Breast epithelium (tissue), 4 donors: ENCODE measurements at regions of chr9 and their contacts with region 1.

Region 1: GRCh38 chr9:127199001-127199791 is 65.4 kb upstream of the GARNL3 start:
- DNase-seq: peak; percentile 70 to 76
- H3K4me3 ChIP-seq: no peak overlapping the region
- H3K27ac ChIP-seq: peak overlapping the region; percentile 40 to 79
- H3K4me1 ChIP-seq: peaks cover 0 to 13% of the 10 kb centered on the region in 2 donors
- H3K27me3 ChIP-seq: no peaks in the 10 kb centered on the region
- CTCF ChIP-seq: peak; percentile 97 to 98 (median 98)
- POLR2A ChIP-seq: no peak

Region 2: GRCh38 chr9:126939821-126940221 is 259.4 kb before region 1 on chr9:
- intact Hi-C with region 1: loop called (anchors 5 kb)
- DNase-seq: no peak
- H3K4me3 ChIP-seq: no peak overlapping the region
- H3K27ac ChIP-seq: no peak overlapping the region
- H3K4me1 ChIP-seq: no peaks in the 10 kb centered on the region
- H3K27me3 ChIP-seq: no peaks in the 10 kb centered on the region
- CTCF ChIP-seq: no peak
- POLR2A ChIP-seq: no peak

Region 3: GRCh38 chr9:127053057-127053821 is 146.0 kb before region 1 on chr9:
- intact Hi-C with region 1: loop called (anchors 10 kb)
- DNase-seq: no peak
- H3K4me3 ChIP-seq: no peak overlapping the region
- H3K27ac ChIP-seq: peak overlapping the region; percentile 68 to 89
- H3K4me1 ChIP-seq: peaks cover 0 to 5% of the 10 kb centered on the region in 2 donors
- H3K27me3 ChIP-seq: no peaks in the 10 kb centered on the region
- CTCF ChIP-seq: no peak
- POLR2A ChIP-seq: no peak

Region 4: GRCh38 chr9:127159325-127159801 is 39.8 kb before region 1 on chr9:
- intact Hi-C with region 1: no loop called
- DNase-seq: peak in 1 of 2 donors; percentile 43
- H3K4me3 ChIP-seq: no peak overlapping the region
- H3K27ac ChIP-seq: peak overlapping the region in 1 of 2 donors; percentile 79
- H3K4me1 ChIP-seq: peaks cover 0 to 4% of the 10 kb centered on the region in 2 donors
- H3K27me3 ChIP-seq: no peaks in the 10 kb centered on the region
- CTCF ChIP-seq: no peak
- POLR2A ChIP-seq: no peak

Region 5: GRCh38 chr9:127178686-127179632 is 20.2 kb before region 1 on chr9:
- intact Hi-C with region 1: no loop called
- DNase-seq: peak; percentile 25 to 31
- H3K4me3 ChIP-seq: no peak overlapping the region
- H3K27ac ChIP-seq: peak overlapping the region; percentile 55 to 76
- H3K4me1 ChIP-seq: peaks cover 0 to 7% of the 10 kb centered on the region in 2 donors
- H3K27me3 ChIP-seq: no peaks in the 10 kb centered on the region
- CTCF ChIP-seq: no peak
- POLR2A ChIP-seq: no peak

Region 6: DNA sequence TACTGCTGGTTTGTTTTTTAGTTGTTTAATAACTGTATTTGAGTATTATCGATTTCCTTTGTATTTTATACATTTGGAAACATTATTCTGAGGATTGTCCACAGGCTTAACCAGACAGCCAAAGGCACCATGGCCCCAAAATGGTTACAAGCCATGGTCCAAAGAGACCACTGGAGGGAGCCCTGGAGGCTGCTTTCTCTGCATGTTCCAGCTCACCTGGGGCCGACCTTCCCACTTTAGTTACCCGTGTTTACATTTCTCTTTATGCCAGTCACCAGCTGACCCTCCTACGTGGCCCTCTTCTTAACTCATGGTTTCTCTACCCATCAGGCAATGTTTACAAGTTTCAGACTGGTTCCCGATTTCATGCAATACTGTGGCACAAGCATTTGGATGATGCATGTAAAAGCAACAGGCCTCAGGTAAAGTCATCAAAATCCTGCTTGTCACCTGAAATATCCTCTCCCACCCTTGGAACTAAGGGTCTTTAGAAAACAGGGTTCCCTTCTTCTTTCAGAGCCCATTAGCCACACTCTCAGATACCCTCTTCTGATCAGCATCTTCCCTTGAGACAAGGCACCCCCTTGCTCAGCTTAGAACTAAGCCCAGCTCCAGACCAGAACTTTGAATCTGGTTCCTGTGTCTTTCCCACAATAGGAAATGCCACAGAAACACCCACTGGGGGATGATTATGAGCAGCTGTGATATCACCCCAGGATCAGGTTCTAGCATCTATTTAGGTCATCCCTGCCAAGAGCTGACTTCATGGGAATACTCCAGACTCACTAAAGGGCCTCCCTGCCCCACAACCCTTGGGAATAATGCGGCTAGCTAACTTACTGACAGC is 15.4 kb after region 1 on chr9:
- intact Hi-C with region 1: no loop called
- DNase-seq: peak; percentile 45 to 67
- H3K4me3 ChIP-seq: no peak overlapping the region
- H3K27ac ChIP-seq: no peak overlapping the region
- H3K4me1 ChIP-seq: no peaks in the 10 kb centered on the region
- H3K27me3 ChIP-seq: no peaks in the 10 kb centered on the region
- CTCF ChIP-seq: peak; percentile 55 to 72 (median 68)
- POLR2A ChIP-seq: no peak